Activated T-helper 2 cell treated with anti-CD3 and anti-CD28 coated beads, Interferon-gamma antibody, Interleukin-2, Interleukin-4, amounts not matched to agents 10 μg/mL and 5 μg/mL and 100 μg/mL, durations not matched to agents 14 hours and 24 hours and 36 hours (primary cell): ENCODE measurements at regions of chr15 and their contacts with region 1.

Region 1: GRCh38 chr15:92831655-92832328 is 68.3 kb upstream of the CHD2 start:
- DNase-seq: peak; percentile 89
- H3K4me3 Mint-ChIP-seq: peak overlapping the region; percentile 61
- H3K27ac Mint-ChIP-seq: peak overlapping the region; percentile 95
- H3K4me1 Mint-ChIP-seq: peaks cover 40% of the 10 kb centered on the region
- H3K27me3 Mint-ChIP-seq: no peaks in the 10 kb centered on the region

Region 2: DNA sequence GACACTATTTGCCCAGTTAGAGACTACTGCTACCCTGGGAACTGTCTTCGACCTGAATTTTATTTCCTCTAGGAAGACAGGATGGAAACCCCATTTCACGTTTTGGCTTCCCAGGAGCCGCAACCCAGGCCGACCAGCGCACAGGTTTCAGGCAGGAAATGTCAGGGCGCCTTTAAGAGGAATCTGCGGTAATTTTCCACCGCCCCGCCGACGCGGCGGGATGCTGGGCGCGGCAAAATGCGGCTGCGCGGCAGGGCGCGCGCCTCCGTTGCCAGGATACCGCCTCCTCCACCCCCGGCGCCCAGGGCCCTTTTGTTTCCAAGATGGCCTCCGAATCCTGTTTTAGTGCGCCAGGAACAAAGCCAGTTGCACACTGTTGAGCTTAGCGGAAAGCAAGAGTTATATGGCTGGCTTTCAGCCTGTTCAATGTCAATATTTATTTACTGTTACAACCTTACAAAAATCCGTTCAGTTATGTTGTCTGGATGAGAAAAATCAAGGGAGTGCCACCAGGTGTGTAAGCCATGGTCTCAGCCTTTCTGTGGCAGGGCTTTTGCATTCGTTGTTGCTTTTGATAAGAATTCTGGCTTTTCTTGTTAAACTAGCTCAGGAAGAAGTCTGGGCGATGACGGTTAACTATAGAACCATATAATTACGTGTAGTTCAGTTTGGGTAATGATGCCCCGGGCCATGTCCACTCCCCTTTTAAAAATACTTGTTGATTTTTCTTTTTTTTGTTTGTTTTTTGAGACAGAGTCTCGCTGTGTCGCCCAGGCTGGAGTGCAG is 11.4 kb before region 1 on chr15:
- intact Hi-C with region 1: loop called (anchors 1 kb)
- DNase-seq: peak; percentile 83
- H3K4me3 Mint-ChIP-seq: peak overlapping the region; percentile 82
- H3K27ac Mint-ChIP-seq: peak overlapping the region; percentile 94
- H3K4me1 Mint-ChIP-seq: peaks cover 47% of the 10 kb centered on the region
- H3K27me3 Mint-ChIP-seq: no peaks in the 10 kb centered on the region

Region 3: DNA sequence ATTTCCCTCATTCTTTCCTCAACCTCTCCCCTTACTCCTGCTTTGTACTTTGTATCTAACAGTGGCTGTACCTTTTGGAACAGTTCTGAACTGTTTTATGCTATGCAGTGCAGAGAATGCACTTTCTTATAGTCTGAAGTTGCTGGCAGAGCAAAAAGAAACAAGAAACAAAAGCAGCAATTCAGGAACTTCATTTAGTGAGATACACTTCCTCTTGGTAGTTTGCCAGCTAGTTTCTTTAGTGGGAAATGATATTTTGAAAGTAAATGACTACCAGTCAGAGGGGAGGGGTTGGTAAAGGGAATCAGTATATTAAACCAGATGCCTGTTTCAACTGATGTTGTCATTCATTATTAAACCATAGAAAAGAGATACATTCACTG is 13.3 kb after region 1 on chr15:
- intact Hi-C with region 1: loop called (anchors 1 kb)
- DNase-seq: no peak
- H3K4me3 Mint-ChIP-seq: peak overlapping the region; percentile 61
- H3K27ac Mint-ChIP-seq: peak overlapping the region; percentile 94
- H3K4me1 Mint-ChIP-seq: peaks cover 44% of the 10 kb centered on the region
- H3K27me3 Mint-ChIP-seq: no peaks in the 10 kb centered on the region